Activated CD8-positive, alpha-beta memory T cell treated with anti-CD3 and anti-CD28 coated beads, Interleukin-2, amount 10 ng/mL, durations not matched to agents 7 days and 5 days (primary cell): ENCODE measurements at regions of chr19 and their contacts with region 1.

Region 1: DNA sequence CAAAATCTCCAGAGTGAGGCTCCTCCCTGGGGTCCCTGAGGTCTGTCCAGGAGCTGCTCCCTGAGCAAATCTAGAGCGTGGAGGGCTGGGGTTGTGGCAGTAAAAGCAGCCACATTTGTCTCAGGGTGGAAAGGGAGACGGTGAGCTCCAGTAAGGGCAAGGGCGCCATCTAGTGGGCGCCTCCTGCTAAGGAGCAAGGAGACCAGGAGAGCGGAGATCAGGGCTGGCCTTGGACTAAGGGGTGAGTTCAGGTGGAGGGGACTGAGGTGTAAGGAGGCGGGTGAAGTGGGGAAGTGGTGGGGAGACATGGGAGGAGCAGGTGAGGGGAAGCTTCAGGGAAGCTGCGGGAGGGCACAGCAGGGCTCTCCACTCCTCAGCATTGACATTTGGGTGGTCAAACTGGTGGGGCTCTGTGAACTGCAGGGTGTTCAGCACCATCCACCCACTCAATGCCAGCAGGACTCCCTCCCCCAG is 5.3 kb upstream of the CEACAM21 start:
- DNase-seq: peak; percentile 89
- ATAC-seq: peak; percentile 96
- H3K4me3 Mint-ChIP-seq: no peak overlapping the region
- H3K27ac Mint-ChIP-seq: peak overlapping the region; percentile 63
- H3K4me1 Mint-ChIP-seq: peaks cover 22% of the 10 kb centered on the region
- H3K27me3 Mint-ChIP-seq: no peaks in the 10 kb centered on the region

Region 2: GRCh38 chr19:41373993-41374392 is 196.7 kb before region 1 on chr19:
- CTCF ChIA-PET with region 1: no interaction called
- DNase-seq: no peak
- ATAC-seq: no peak
- H3K4me3 Mint-ChIP-seq: no peak overlapping the region
- H3K27ac Mint-ChIP-seq: no peak overlapping the region
- H3K4me1 Mint-ChIP-seq: peaks cover 11% of the 10 kb centered on the region
- H3K27me3 Mint-ChIP-seq: no peaks in the 10 kb centered on the region

Region 3: DNA sequence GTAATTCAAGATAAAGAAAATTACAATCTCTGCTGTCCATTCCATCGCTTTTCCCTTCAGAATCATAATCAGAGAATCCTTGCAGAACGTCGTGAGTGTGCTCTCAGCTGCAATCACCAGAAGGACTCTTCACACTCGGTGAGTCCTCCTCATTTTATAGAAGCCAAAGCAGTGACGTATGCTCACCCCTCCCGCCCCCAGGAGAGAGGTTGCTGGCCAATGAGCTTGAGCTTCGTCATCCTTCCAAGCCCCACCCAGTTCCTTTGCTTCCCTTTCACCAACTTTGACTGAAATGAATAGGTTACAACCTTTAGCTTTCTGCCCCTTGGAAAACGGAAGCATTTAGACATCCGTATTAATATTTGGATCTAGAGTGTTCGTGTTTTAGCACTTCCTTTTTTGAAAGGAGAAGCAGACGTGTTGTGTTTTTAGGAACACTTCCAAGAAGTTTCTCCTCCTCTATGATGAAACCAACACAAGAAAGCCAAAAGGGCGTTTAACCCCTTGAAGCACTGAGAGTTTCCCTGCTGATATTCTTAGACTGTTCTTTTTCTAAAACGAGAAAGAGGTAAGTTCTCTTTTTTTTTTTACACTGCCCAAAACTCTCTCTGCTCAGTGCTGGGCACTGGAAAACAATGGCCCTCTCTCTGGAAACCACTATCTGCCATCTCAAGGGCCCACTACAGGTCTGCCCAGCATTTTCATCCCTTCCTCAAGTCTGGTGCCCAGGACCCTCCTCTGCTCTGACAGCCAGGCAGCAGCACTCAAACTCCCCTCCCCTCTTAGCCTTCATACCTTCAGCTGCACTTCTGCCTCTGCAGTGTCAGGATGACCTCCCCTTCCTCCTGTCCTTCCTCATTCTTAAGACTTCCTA is 39.0 kb before region 1 on chr19:
- CTCF ChIA-PET with region 1: interaction called, 497 read pairs
- DNase-seq: peak; percentile 89
- ATAC-seq: peak; percentile 76
- H3K4me3 Mint-ChIP-seq: peak overlapping the region; percentile 71
- H3K27ac Mint-ChIP-seq: peak overlapping the region; percentile 75
- H3K4me1 Mint-ChIP-seq: peaks cover 74% of the 10 kb centered on the region
- H3K27me3 Mint-ChIP-seq: peaks cover 23% of the 10 kb centered on the region

Region 4: GRCh38 chr19:41554907-41555306 is 15.8 kb before region 1 on chr19:
- CTCF ChIA-PET with region 1: interaction called, 497 read pairs
- DNase-seq: peak; percentile 75
- ATAC-seq: peak; percentile 60
- H3K4me3 Mint-ChIP-seq: peak overlapping the region; percentile 59
- H3K27ac Mint-ChIP-seq: peak overlapping the region; percentile 89
- H3K4me1 Mint-ChIP-seq: peaks cover 70% of the 10 kb centered on the region
- H3K27me3 Mint-ChIP-seq: no peaks in the 10 kb centered on the region

Region 5: DNA sequence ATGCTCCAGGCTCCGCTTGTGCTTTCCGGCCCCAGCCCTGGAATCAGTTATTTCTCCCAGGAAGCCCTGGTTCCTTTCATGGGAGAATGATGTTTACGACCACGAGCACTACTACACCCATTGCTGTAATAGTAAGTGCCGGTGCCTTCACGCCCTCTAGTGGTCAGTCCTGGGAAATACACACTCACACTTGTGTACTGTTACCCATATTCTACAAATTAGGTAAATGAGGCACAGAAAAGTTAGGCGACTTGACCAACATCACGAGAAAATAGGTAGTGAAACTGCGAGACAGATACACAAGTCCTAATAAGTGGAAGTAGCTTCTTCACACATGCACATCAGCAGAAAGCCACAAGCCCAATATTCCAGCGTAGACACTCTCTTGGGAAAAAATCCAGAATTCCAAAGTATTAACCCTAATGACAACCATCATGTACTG is 26.9 kb after region 1 on chr19:
- CTCF ChIA-PET with region 1: interaction called, 61 read pairs
- DNase-seq: peak; percentile 87
- ATAC-seq: peak; percentile 75
- H3K4me3 Mint-ChIP-seq: no peak overlapping the region
- H3K27ac Mint-ChIP-seq: no peak overlapping the region
- H3K4me1 Mint-ChIP-seq: peaks cover 17% of the 10 kb centered on the region
- H3K27me3 Mint-ChIP-seq: peaks cover 48% of the 10 kb centered on the region

Region 6: GRCh38 chr19:41649834-41650233 is 79.2 kb after region 1 on chr19:
- CTCF ChIA-PET with region 1: no interaction called
- DNase-seq: no peak
- ATAC-seq: no peak
- H3K4me3 Mint-ChIP-seq: no peak overlapping the region
- H3K27ac Mint-ChIP-seq: no peak overlapping the region
- H3K4me1 Mint-ChIP-seq: no peaks in the 10 kb centered on the region
- H3K27me3 Mint-ChIP-seq: peaks cover 44% of the 10 kb centered on the region